HEK293 (cell line): ENCODE measurements at regions of chr14 and their contacts with region 1.

Region 1: DNA sequence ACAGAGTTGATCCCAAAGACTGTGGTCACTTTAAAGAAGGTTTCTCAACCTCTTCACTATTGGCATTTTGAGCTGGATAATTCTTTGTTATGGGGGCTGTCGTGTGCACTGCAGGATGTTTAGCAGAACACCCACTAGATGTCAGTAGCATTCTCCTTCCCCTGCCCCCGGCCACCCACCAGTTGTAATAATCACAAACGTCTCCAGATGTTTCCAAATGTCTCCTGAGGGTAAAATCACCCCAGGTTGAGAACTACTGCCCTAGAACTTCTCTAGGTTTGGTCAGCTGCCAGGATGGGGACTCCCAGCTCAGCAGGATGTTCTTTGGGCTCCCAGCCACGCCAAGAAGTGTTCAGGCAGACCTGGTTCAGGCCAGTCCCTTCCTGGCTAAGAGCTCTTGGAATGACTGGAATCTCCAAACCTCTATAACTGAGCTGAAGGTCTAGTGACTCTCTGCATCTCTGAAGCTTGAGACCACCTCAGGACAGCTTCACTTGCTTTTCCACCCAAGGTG is 12.5 kb upstream of the AJUBA start:
- H3K4me3 ChIP-seq: no peak overlapping the region
- H3K27ac ChIP-seq: no peak overlapping the region
- H3K4me1 ChIP-seq: peaks cover 7% of the 10 kb centered on the region
- CTCF ChIP-seq: no peak

Region 2: GRCh38 chr14:23006544-23007419 is 12.0 kb after region 1 on chr14:
- CTCF ChIA-PET with region 1: interaction called, 42 read pairs
- POLR2A ChIA-PET with region 1: interaction called, 50 read pairs
- H3K4me3 ChIP-seq: peak overlapping the region; percentile 52
- H3K27ac ChIP-seq: peak overlapping the region; percentile 91
- H3K4me1 ChIP-seq: peaks cover 8% of the 10 kb centered on the region; the same call in 1 of the 2 replicates
- CTCF ChIP-seq: peak; percentile 85

Region 3: GRCh38 chr14:23041729-23042128 is 46.9 kb after region 1 on chr14:
- CTCF ChIA-PET with region 1: interaction called, 22 read pairs
- POLR2A ChIA-PET with region 1: interaction called, 5 read pairs
- H3K4me3 ChIP-seq: no peak overlapping the region
- H3K27ac ChIP-seq: no peak overlapping the region
- H3K4me1 ChIP-seq: no peaks in the 10 kb centered on the region
- CTCF ChIP-seq: no peak

Region 4: DNA sequence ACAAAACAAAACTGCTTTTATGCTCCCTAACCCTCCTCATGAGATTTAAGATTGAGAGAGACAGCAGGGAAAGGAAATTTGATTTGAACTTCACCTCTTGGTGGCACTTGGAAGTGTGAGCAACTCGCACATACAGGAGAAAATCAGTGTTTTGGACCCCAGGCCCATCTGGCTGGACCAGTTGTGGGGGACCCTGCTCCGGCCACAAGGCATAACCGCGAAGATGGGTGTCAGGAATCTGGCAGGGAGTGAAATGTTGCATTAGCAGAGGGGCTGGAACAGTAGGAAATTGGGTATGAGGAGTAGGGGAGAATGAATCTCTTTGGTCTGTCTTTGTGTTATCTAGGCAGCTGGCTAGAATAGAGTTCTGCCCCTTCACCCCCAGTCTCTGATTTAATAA is 108.8 kb after region 1 on chr14:
- CTCF ChIA-PET with region 1: no interaction called
- POLR2A ChIA-PET with region 1: no interaction called
- H3K4me3 ChIP-seq: no peak overlapping the region
- H3K27ac ChIP-seq: no peak overlapping the region
- H3K4me1 ChIP-seq: peaks cover 4% of the 10 kb centered on the region
- CTCF ChIP-seq: no peak

Region 5: GRCh38 chr14:23556700-23557440 is 562.1 kb after region 1 on chr14:
- CTCF ChIA-PET with region 1: no interaction called
- POLR2A ChIA-PET with region 1: no interaction called
- H3K4me3 ChIP-seq: peak overlapping the region; percentile 85
- H3K27ac ChIP-seq: peak overlapping the region; percentile 81
- H3K4me1 ChIP-seq: peaks cover 9% of the 10 kb centered on the region
- CTCF ChIP-seq: no peak